Ascending aorta (tissue), 2 donors: ENCODE measurements at regions of chr22 and their contacts with region 1.

Region 1: DNA sequence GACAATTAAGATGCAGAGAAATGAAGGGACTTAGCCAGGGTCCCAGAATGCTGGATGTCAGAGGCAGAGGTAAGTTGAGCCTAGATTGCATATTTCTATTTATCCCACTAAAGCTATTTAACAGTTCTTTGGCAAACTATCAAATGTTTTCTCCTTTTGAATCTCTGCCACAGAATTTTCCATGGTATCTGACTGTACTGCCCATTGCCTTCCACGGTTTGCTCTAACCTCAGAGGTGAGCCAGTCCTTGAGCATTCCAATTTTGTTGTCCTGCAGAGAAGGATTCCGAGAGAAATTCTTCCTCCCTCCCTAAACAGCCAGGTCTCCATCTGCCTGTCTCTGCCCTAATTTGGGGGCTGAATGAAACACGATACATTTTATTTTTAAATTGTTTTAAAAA is 368.3 kb upstream of the SYN3 start:
- DNase-seq: no peak
- H3K4me3 ChIP-seq: no peak overlapping the region
- H3K27ac ChIP-seq: no peak overlapping the region
- H3K4me1 ChIP-seq: no peaks in the 10 kb centered on the region
- H3K27me3 ChIP-seq: no peaks in the 10 kb centered on the region
- CTCF ChIP-seq: no peak

Region 2: DNA sequence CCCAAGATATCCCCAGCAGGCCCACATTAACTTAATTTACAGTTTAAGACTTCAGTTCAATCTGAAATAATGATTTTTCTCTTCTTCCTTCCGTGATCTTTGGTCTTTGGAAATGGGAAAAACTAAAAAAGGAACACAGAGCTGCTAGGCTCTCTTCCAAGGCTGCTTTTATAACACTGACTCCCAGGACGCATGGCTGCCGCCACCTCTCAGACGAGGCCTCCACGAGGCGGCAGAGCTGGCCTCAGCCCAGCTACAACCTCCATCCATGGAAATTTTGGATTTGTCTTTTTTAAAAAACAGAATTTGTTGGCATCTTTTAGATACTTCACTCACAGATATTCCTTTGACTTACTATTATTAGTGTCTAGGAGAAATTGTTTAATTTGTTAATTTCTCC is 17.2 kb after region 1 on chr22:
- intact Hi-C with region 1: loop called (anchors 1 kb)
- DNase-seq: no peak
- H3K4me3 ChIP-seq: no peak overlapping the region
- H3K27ac ChIP-seq: no peak overlapping the region
- H3K4me1 ChIP-seq: no peaks in the 10 kb centered on the region
- H3K27me3 ChIP-seq: no peaks in the 10 kb centered on the region
- CTCF ChIP-seq: no peak

Region 3: GRCh38 chr22:33472462-33473344 is 46.3 kb after region 1 on chr22:
- intact Hi-C with region 1: no loop called
- DNase-seq: no peak
- H3K4me3 ChIP-seq: no peak overlapping the region
- H3K27ac ChIP-seq: no peak overlapping the region
- H3K4me1 ChIP-seq: no peaks in the 10 kb centered on the region
- H3K27me3 ChIP-seq: no peaks in the 10 kb centered on the region
- CTCF ChIP-seq: no peak